ENCODE measurements at regions of chr1 and their contacts with region 1.

Region 1: GRCh38 chr1:90850898-90851710 is 134.0 kb upstream of the BARHL2 start:
- DNase-seq: peak; percentile 70 to 76
- H3K4me3 ChIP-seq: peak overlapping the region; percentile 87
- H3K4me3 Mint-ChIP-seq: peak overlapping the region; percentile 77
- H3K27ac Mint-ChIP-seq: no peak overlapping the region
- H3K4me1 ChIP-seq: no peaks in the 10 kb centered on the region
- H3K4me1 Mint-ChIP-seq: no peaks in the 10 kb centered on the region
- H3K27me3 ChIP-seq: no peaks in the 10 kb centered on the region
- H3K27me3 Mint-ChIP-seq: no peaks in the 10 kb centered on the region
- CTCF ChIP-seq: peak; percentile 45 to 54

Region 2: DNA sequence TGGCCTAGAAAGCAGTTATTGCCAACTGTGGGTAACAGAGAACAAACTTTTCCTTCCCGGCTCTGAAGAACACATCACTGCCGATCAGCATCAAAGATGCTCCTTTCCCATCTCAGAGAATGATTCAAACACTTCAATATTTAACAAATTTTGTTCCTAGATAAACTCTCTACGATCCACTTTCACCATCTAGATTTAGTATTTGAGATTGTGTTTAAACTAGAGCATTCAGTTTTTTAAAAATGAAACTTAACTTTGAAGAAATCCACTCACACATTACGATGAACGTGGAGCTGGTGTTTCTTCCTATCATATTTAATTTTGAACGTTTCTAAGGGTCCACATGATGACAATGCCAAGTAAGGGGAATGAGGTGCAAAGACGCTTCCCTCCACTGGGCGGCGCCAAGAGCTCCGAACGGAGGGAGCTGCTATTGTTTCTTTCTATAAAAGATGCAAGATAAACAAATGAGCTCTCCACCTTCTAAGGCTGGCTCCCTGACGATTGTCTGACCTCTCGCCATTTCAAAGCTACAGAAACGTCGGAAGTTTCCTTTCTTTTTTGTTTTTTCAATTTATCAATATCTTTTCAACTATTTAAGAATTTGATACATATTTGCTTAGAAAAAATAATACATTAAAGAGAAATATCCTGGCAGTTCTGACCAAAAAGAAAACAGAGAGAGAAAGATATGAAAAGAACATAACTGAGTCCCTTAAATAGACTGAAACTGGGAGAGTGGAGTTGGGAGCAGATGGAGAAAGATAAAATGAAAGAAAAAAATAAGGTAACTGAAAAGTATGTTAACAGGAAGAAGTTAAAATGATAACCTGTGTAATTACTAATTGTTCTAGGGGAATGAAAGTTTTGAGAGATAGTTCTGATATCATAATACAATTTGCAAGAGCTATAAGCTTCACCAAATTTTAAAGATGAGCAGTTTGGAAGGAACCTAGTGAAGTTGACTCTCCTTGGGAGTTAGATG is 129.6 kb before region 1 on chr1:
- CTCF ChIA-PET with region 1: interaction called, 4 read pairs
- POLR2A ChIA-PET with region 1: no interaction called
- intact Hi-C with region 1: loop called (anchors 10 kb)
- DNase-seq: peak in 1 of 2 experiments; percentile 57
- H3K4me3 ChIP-seq: no peak overlapping the region
- H3K4me3 Mint-ChIP-seq: no peak overlapping the region
- H3K27ac Mint-ChIP-seq: no peak overlapping the region
- H3K4me1 ChIP-seq: no peaks in the 10 kb centered on the region
- H3K4me1 Mint-ChIP-seq: no peaks in the 10 kb centered on the region
- H3K27me3 ChIP-seq: no peaks in the 10 kb centered on the region
- H3K27me3 Mint-ChIP-seq: peaks cover 5% of the 10 kb centered on the region
- CTCF ChIP-seq: peak; percentile 55 to 68